CD8-positive, alpha-beta memory T cell (primary cell): ENCODE measurements at regions of chr4 and their contacts with region 1.

Region 1: DNA sequence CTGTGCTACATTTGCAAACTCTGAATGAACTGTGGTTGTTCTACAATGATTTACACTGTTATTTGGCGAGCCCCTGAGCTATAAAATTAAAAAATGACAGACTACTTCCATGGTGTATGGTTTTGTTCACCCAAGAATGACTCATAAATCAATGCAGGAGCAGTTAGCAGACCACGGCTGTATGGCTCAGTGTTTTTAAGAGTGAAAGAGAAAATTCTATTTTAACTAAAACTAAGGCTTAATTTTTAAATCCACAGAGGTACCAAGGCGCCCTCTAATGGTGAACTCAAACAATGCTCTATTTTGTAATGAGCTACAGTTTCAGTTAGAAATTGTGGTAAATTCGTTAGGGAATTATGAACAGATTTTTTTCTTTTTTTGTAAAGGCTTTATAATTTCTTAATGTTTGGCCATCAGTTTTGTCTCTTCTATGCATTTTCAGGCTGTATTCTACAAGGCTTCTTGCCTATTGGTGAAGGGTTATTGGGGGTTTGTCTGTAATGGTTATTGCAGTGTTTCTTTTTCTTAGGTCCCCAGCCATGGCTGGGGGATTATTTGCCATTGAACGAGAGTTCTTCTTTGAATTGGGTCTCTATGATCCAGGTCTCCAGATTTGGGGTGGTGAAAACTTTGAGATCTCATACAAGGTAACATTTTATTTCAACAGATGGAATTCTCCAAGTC is 32.5 kb downstream of the HMGB2 start:
- DNase-seq: peak in 2 of 5 donors; percentile 1 to 19
- H3K4me3 ChIP-seq: no peak overlapping the region
- H3K4me3 Mint-ChIP-seq: no peak overlapping the region
- H3K27ac ChIP-seq: no peak overlapping the region
- H3K27ac Mint-ChIP-seq: peak overlapping the region in 2 of 8 donors; percentile 15 to 46
- H3K4me1 ChIP-seq: no peaks in the 10 kb centered on the region
- H3K4me1 Mint-ChIP-seq: peaks cover 0 to 6% (median 5%) of the 10 kb centered on the region in 3 donors
- H3K27me3 ChIP-seq: no peaks in the 10 kb centered on the region
- H3K27me3 Mint-ChIP-seq: no peaks in the 10 kb centered on the region

Region 2: DNA sequence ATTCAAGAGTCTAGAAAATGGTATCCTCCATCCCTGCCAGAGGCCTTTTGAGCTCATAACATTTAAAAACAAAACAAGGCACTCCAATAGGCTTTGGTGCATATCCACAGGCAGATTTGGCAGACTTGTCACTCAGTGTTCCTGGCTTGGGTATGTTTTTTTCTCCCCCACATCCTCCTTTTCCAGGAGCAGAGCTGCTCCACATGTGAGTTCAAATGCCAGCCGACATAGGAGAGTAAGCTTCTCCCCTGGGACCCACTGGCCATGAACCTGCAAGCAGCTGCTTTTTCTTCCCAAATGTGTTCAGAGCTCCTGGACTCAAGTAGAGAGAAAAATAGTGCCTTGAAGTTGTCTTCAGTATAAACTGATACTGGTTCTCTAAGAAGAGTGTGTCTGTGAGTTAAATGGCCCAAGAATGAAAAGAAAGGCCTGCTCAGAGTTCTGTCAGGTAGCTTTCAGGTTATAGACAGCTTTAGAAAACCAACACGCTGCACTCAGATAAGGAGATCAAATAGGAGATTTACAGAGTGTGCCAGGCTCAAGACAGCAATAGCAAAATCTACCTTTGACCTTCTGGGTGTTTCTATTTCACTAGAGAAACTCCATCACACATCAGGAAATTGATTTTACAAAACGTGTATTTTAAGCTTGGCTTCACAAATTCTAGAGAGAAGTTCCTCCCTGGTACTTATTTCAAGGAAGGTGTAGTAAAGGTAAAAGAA is 295.6 kb before region 1 on chr4:
- CTCF ChIA-PET with region 1: interaction called, 11 read pairs
- POLR2A ChIA-PET with region 1: no interaction called
- DNase-seq: no peak
- H3K4me3 ChIP-seq: no peak overlapping the region
- H3K4me3 Mint-ChIP-seq: no peak overlapping the region
- H3K27ac ChIP-seq: no peak overlapping the region
- H3K27ac Mint-ChIP-seq: no peak overlapping the region
- H3K4me1 ChIP-seq: no peaks in the 10 kb centered on the region
- H3K4me1 Mint-ChIP-seq: no peaks in the 10 kb centered on the region
- H3K27me3 ChIP-seq: no peaks in the 10 kb centered on the region
- H3K27me3 Mint-ChIP-seq: peaks cover 4 to 6% of the 10 kb centered on the region in 2 donors

Region 3: DNA sequence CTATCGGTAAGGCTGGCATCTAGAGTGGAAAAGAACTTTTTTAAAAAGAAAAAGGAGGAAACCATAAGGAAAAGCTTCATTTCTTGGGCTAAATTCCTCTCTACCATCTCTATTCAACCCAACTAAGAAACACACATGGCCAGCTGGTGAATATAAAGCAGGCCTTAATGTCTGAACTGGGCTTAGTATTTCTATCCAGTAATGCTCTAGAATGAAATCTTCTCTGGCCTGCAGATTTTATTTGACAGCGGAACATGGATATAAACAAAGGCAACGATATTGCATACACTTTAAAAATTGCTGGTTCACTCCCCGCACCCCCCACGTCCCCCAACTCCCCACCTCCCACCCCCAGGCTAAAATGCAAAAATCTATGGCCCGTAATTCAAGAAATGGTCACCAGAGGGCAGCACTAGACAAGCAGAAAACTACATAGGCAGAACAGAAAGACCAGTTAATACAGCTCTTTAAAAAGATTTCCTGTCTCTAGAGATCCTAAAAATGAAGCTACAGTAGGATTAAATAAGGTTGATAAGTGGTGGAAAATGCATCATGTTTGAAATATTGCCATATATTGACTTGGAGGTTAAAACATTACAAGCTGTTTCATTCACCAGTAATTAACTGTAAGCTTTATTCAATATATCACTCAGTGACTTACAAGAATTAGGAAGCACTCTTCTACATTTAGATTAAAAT is 288.3 kb before region 1 on chr4:
- CTCF ChIA-PET with region 1: interaction called, 39 read pairs
- POLR2A ChIA-PET with region 1: no interaction called
- DNase-seq: peak; percentile 13 to 51 (median 33)
- H3K4me3 ChIP-seq: no peak overlapping the region
- H3K4me3 Mint-ChIP-seq: no peak overlapping the region
- H3K27ac ChIP-seq: no peak overlapping the region
- H3K27ac Mint-ChIP-seq: no peak overlapping the region
- H3K4me1 ChIP-seq: no peaks in the 10 kb centered on the region
- H3K4me1 Mint-ChIP-seq: no peaks in the 10 kb centered on the region
- H3K27me3 ChIP-seq: no peaks in the 10 kb centered on the region
- H3K27me3 Mint-ChIP-seq: peaks cover 0 to 8% of the 10 kb centered on the region in 2 donors

Region 4: DNA sequence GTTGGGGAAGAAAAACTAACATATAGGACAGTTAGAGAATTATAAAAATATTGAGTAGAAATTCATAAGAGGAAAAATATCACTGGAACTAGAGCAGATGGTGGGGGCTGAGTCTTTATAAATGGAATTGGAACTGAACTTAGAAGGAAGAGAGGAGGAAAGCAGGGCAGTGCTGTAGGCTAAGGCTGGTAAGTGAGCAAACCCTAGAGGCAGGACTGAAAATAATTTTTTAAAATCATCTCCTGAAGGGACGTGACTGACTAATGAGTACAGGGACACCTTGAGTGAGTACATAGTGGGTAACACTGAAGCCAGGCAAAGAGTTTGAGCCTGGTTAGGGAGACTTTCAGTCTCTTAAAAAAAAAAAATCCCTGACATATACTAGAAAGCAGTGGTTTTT is 69.7 kb before region 1 on chr4:
- CTCF ChIA-PET with region 1: no interaction called
- POLR2A ChIA-PET with region 1: no interaction called
- DNase-seq: no peak
- H3K4me3 ChIP-seq: no peak overlapping the region
- H3K4me3 Mint-ChIP-seq: no peak overlapping the region
- H3K27ac ChIP-seq: no peak overlapping the region
- H3K27ac Mint-ChIP-seq: peak overlapping the region in 2 of 8 donors; percentile 11 to 32
- H3K4me1 ChIP-seq: peaks cover 4% of the 10 kb centered on the region
- H3K4me1 Mint-ChIP-seq: peaks cover 10 to 21% (median 10%) of the 10 kb centered on the region in 3 donors
- H3K27me3 ChIP-seq: no peaks in the 10 kb centered on the region
- H3K27me3 Mint-ChIP-seq: no peaks in the 10 kb centered on the region

Region 5: DNA sequence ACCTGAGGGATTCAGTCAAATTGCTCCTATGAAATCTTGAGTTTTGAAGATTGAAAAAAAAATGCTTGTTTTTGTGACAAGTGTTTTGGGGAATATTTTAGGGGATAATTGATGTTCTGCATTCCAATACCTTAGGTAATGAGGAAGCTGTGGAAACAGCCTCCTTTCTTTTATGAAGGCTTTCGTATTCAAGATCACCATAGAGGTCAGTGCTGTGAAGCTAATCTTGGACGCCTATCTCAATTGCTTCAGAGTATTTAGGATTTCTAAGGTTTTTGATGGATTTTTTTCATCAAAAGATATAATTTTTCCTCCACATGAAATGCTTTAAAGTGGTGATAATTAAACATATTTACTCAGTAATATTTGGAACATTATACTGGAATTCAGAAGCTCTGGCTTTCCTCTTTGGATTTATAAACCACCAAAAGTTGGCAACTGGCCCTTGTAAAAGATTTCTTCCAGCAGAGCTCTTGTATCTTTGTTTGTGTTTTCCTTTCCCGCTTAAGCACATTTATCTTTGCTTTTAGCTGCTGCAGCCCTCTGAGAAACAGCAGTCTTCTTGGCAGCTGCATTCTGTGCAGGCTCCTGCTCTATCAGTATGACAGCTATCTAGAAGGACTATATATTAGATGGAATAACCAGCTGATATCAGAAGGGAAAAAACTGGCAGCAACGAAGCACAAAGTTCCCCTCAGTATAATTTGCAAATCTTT is 31.2 kb before region 1 on chr4:
- CTCF ChIA-PET with region 1: no interaction called
- POLR2A ChIA-PET with region 1: no interaction called
- DNase-seq: no peak
- H3K4me3 ChIP-seq: no peak overlapping the region
- H3K4me3 Mint-ChIP-seq: no peak overlapping the region
- H3K27ac ChIP-seq: no peak overlapping the region
- H3K27ac Mint-ChIP-seq: no peak overlapping the region
- H3K4me1 ChIP-seq: no peaks in the 10 kb centered on the region
- H3K4me1 Mint-ChIP-seq: peaks cover 12 to 30% (median 21%) of the 10 kb centered on the region in 3 donors
- H3K27me3 ChIP-seq: no peaks in the 10 kb centered on the region
- H3K27me3 Mint-ChIP-seq: no peaks in the 10 kb centered on the region

Region 6: DNA sequence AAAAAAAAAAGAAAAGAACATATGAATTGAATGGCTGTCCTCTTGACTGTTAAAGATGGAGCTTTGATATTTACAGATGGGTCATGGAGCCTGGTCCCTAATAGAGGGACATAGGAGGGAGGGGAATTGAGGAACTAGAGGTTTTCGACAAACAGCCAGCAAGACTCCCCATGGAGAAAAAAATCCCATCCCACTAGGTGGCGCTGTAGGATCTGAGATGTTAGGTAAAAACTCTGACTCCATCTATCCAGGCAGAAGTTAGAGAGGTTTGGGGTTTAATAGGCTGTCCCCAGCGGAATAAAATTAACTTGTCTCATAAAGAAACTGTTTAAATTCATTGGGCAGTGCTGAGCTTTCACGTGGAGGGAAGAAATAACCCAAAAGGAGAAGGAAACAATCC is 13.4 kb before region 1 on chr4:
- CTCF ChIA-PET with region 1: interaction called, 16 read pairs
- POLR2A ChIA-PET with region 1: no interaction called
- DNase-seq: peak; percentile 29 to 71 (median 49)
- H3K4me3 ChIP-seq: no peak overlapping the region
- H3K4me3 Mint-ChIP-seq: peak overlapping the region in 1 of 7 donors; percentile 25
- H3K27ac ChIP-seq: no peak overlapping the region
- H3K27ac Mint-ChIP-seq: peak overlapping the region in 2 of 8 donors; percentile 20 to 48
- H3K4me1 ChIP-seq: no peaks in the 10 kb centered on the region
- H3K4me1 Mint-ChIP-seq: peaks cover 7 to 9% (median 8%) of the 10 kb centered on the region in 3 donors
- H3K27me3 ChIP-seq: no peaks in the 10 kb centered on the region
- H3K27me3 Mint-ChIP-seq: no peaks in the 10 kb centered on the region